Ascending aorta (tissue), 2 donors: ENCODE measurements at regions of chr16 and their contacts with region 1.

Region 1: DNA sequence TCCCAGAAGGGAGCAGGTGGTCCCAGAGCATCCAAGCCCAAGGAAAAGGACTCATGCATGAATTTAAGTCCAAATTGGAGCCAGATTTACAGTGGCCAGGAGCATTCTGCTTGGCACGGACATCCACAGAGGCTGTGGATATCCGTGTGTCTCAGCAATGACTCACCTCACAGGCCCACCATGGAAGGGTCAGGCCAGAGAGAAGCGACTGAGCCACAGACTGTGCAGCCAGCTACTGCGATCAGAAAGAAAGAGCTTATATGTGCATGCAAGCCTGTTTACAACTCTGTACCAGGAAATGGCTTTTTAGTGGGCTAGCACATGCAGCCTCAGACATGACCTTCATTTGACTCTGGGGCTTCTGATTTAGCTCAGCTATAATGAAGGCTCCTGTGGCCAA is 231.0 kb downstream of the C16orf95 start:
- DNase-seq: no peak
- H3K4me3 ChIP-seq: no peak overlapping the region
- H3K27ac ChIP-seq: no peak overlapping the region
- H3K4me1 ChIP-seq: no peaks in the 10 kb centered on the region
- H3K27me3 ChIP-seq: no peaks in the 10 kb centered on the region
- CTCF ChIP-seq: no peak

Region 2: DNA sequence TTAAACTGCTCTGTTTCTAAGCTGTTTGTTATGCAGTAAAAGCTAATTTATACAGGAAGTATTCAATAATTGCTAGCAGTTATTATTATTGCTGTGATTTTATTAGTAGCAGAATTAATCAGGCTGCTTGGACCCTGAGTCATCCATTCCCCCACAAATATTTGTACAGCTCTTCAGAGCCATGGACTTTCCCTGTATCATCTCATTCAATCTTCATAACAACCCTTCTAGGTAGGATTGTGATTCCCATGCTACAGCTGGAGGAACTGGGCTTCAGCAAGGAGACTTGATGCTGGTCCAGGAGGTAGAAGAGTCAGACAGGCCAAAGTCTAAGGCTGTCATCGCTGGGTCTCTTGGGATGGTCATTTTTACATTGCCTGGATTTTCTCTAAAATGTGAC is 22.8 kb after region 1 on chr16:
- intact Hi-C with region 1: loop called (anchors 1 kb)
- DNase-seq: no peak
- H3K4me3 ChIP-seq: no peak overlapping the region
- H3K27ac ChIP-seq: no peak overlapping the region
- H3K4me1 ChIP-seq: no peaks in the 10 kb centered on the region
- H3K27me3 ChIP-seq: no peaks in the 10 kb centered on the region
- CTCF ChIP-seq: no peak

Region 3: GRCh38 chr16:87145181-87146176 is 59.3 kb after region 1 on chr16:
- intact Hi-C with region 1: loop called (anchors 10 kb)
- DNase-seq: no peak
- H3K4me3 ChIP-seq: no peak overlapping the region
- H3K27ac ChIP-seq: no peak overlapping the region
- H3K4me1 ChIP-seq: peaks cover 0 to 5% of the 10 kb centered on the region in 2 donors
- H3K27me3 ChIP-seq: no peaks in the 10 kb centered on the region
- CTCF ChIP-seq: no peak